H1 (cell line): ENCODE measurements at regions of chr4 and their contacts with region 1.

Region 1: GRCh38 chr4:15882675-15883086 is 55.9 kb downstream of the FGFBP1 start:
- DNase-seq: peak; percentile 47 to 51
- H3K4me3 ChIP-seq: no peak overlapping the region
- H3K27ac ChIP-seq: no peak overlapping the region
- H3K4me1 ChIP-seq: peaks cover 0 to 6% (median 0%) of the 10 kb centered on the region in 4 experiments; a peak in 1 of 7 replicates
- H3K27me3 ChIP-seq: no peaks in the 10 kb centered on the region
- CTCF ChIP-seq: peak; percentile 77 to 99 (median 90)
- EP300 ChIP-seq: no peak
- POLR2A ChIP-seq: no peak
- RAD21 ChIP-seq: peak; percentile 89 to 90

Region 2: GRCh38 chr4:15805583-15806517 is 76.8 kb before region 1 on chr4:
- CTCF ChIA-PET with region 1: interaction called, 150 read pairs
- POLR2A ChIA-PET with region 1: no interaction called
- DNase-seq: no peak
- H3K4me3 ChIP-seq: no peak overlapping the region
- H3K27ac ChIP-seq: no peak overlapping the region
- H3K4me1 ChIP-seq: peaks cover 0 to 3% (median 0%) of the 10 kb centered on the region in 4 experiments; a peak in 1 of 7 replicates
- H3K27me3 ChIP-seq: no peaks in the 10 kb centered on the region
- CTCF ChIP-seq: peak; percentile 0 to 85 (median 78)
- EP300 ChIP-seq: no peak
- POLR2A ChIP-seq: no peak
- RAD21 ChIP-seq: peak; percentile 92 to 95

Region 3: GRCh38 chr4:15855804-15856475 is 26.7 kb before region 1 on chr4:
- CTCF ChIA-PET with region 1: interaction called, 10 read pairs
- POLR2A ChIA-PET with region 1: no interaction called
- DNase-seq: no peak
- H3K4me3 ChIP-seq: no peak overlapping the region
- H3K27ac ChIP-seq: no peak overlapping the region
- H3K4me1 ChIP-seq: no peaks in the 10 kb centered on the region
- H3K27me3 ChIP-seq: no peaks in the 10 kb centered on the region
- CTCF ChIP-seq: no peak
- EP300 ChIP-seq: no peak
- POLR2A ChIP-seq: no peak
- RAD21 ChIP-seq: no peak

Region 4: GRCh38 chr4:15906024-15906443 is 23.4 kb after region 1 on chr4:
- CTCF ChIA-PET with region 1: interaction called, 24 read pairs
- POLR2A ChIA-PET with region 1: no interaction called
- DNase-seq: peak; percentile 79 to 80
- H3K4me3 ChIP-seq: peak overlapping the region; percentile 6 to 55 (median 30); a peak in 6 of 8 replicates
- H3K27ac ChIP-seq: no peak overlapping the region; the same call in 1 of the 2 replicates
- H3K4me1 ChIP-seq: peaks cover 0 to 2% (median 0%) of the 10 kb centered on the region in 4 experiments; a peak in 1 of 7 replicates
- H3K27me3 ChIP-seq: no peaks in the 10 kb centered on the region
- CTCF ChIP-seq: peak in 1 of 3 experiments; percentile 0; a peak in 1 of 4 replicates
- EP300 ChIP-seq: no peak
- POLR2A ChIP-seq: 0 out of 3 replicates have a peak, but pooled peaks of 1 of the 2 experiments have one; percentile 22
- RAD21 ChIP-seq: no peak

Region 5: GRCh38 chr4:15938182-15938581 is 55.5 kb after region 1 on chr4:
- CTCF ChIA-PET with region 1: interaction called, 40 read pairs
- POLR2A ChIA-PET with region 1: no interaction called
- DNase-seq: peak in 1 of 2 experiments; percentile 54
- H3K4me3 ChIP-seq: no peak overlapping the region
- H3K27ac ChIP-seq: no peak overlapping the region
- H3K4me1 ChIP-seq: peaks cover 0 to 9% (median 3%) of the 10 kb centered on the region in 4 experiments; a peak in 2 of 7 replicates
- H3K27me3 ChIP-seq: no peaks in the 10 kb centered on the region
- CTCF ChIP-seq: no peak
- EP300 ChIP-seq: no peak
- POLR2A ChIP-seq: no peak
- RAD21 ChIP-seq: no peak

Region 6: DNA sequence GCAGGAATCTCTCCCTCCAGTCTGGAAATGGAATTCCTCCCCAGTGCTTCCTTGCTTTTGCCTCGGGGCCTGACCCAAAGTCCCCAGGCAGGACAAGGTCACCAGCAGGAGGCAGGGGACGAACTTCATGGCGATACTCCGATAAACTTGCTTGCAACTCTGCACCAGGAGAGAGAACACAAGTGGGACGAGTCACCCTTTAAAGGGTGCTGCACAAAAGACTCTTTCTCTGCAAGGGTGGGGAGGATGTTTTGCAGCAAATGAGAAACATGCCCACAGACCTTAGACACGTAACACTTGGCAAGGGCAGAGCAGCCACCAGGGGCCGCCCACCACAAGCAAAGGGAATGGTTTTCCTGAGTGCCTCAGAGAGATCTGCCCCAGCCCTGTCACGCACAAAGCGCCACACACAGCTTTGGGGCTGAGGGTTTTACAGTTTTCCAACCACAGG is 80.3 kb after region 1 on chr4 and contains the start of gene FGFBP2:
- CTCF ChIA-PET with region 1: interaction called, 32 read pairs
- POLR2A ChIA-PET with region 1: no interaction called
- DNase-seq: peak in 1 of 2 experiments; percentile 78
- H3K4me3 ChIP-seq: no peak within 1 kb of the TSS
- H3K27ac ChIP-seq: no peak within 1 kb of the TSS
- H3K4me1 ChIP-seq: peaks cover 0 to 2% (median under 1%) of the 10 kb centered on the region in 4 experiments; a peak in 4 of 7 replicates
- H3K27me3 ChIP-seq: no peaks in the 10 kb centered on the region
- CTCF ChIP-seq: peak; percentile 74 to 89 (median 82)
- EP300 ChIP-seq: no peak
- POLR2A ChIP-seq: no peak
- RAD21 ChIP-seq: peak; percentile 81 to 83
- total RNA-seq, gene FGFBP2: not detected in 2 replicates

Region 7: DNA sequence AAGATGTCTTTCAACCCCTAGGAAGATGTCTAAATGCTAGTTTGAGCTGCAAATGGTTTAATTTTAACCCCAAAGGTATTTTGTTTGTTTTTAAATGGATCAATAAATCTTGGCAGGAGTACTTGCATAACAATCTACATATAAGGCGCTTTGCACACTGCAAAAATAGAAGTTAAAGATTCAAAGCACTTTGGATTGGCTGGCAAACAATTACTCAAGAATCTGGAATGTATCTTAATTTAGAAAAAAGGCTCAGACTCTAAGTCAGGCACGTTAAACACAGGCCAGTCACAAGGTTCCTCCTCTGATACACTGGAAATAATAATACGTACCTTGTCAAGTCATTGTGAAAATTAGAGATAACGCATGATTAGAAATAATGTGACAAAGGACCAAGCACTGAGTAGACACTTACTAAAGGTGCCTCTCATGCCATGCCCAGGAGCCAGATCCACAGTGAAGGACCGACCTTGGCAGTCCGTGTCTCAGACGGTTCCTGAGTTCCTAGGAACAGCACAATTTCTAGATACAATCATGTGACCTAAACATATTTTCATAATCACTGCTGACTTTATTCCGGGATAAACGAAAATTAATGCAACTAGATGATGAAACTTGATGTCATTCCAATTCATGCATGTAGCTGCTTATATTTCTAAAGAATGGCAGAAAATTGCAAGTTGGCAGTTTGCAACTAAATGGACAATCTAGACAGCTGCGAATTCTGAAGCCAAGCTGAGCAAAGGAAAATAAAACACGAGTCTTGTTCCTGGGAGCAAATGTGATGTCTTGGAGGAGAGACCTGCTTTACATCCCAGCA is 151.5 kb after region 1 on chr4:
- CTCF ChIA-PET with region 1: no interaction called
- POLR2A ChIA-PET with region 1: no interaction called
- DNase-seq: no peak
- H3K4me3 ChIP-seq: no peak overlapping the region
- H3K27ac ChIP-seq: no peak overlapping the region
- H3K4me1 ChIP-seq: peaks cover 7 to 40% (median 32%) of the 10 kb centered on the region in 4 experiments; a peak in 6 of 7 replicates
- H3K27me3 ChIP-seq: no peaks in the 10 kb centered on the region
- CTCF ChIP-seq: no peak
- EP300 ChIP-seq: no peak
- POLR2A ChIP-seq: no peak
- RAD21 ChIP-seq: no peak

Region 8: GRCh38 chr4:16085822-16086221 is 203.1 kb after region 1 on chr4:
- CTCF ChIA-PET with region 1: no interaction called
- POLR2A ChIA-PET with region 1: no interaction called
- DNase-seq: no peak
- H3K4me3 ChIP-seq: no peak overlapping the region
- H3K27ac ChIP-seq: no peak overlapping the region
- H3K4me1 ChIP-seq: peaks cover 0 to 6% (median 4%) of the 10 kb centered on the region in 4 experiments; a peak in 3 of 7 replicates
- H3K27me3 ChIP-seq: peaks cover 0 to 9% (median 4%) of the 10 kb centered on the region in 4 experiments; a peak in 5 of 7 replicates
- CTCF ChIP-seq: no peak
- EP300 ChIP-seq: no peak
- POLR2A ChIP-seq: no peak
- RAD21 ChIP-seq: no peak